ENCODE measurements at regions of chr10 and their contacts with region 1.

Region 1: GRCh38 chr10:12902135-12902572 is 99.4 kb downstream of the CCDC3 start:
- DNase-seq: no peak
- ATAC-seq: peak in 1 of 4 donors; percentile 69
- H3K4me3 ChIP-seq: no peak overlapping the region
- H3K27ac ChIP-seq: no peak overlapping the region
- H3K4me1 ChIP-seq: no peaks in the 10 kb centered on the region
- H3K27me3 ChIP-seq: no peaks in the 10 kb centered on the region
- CTCF ChIP-seq: peak; percentile 63

Region 2: DNA sequence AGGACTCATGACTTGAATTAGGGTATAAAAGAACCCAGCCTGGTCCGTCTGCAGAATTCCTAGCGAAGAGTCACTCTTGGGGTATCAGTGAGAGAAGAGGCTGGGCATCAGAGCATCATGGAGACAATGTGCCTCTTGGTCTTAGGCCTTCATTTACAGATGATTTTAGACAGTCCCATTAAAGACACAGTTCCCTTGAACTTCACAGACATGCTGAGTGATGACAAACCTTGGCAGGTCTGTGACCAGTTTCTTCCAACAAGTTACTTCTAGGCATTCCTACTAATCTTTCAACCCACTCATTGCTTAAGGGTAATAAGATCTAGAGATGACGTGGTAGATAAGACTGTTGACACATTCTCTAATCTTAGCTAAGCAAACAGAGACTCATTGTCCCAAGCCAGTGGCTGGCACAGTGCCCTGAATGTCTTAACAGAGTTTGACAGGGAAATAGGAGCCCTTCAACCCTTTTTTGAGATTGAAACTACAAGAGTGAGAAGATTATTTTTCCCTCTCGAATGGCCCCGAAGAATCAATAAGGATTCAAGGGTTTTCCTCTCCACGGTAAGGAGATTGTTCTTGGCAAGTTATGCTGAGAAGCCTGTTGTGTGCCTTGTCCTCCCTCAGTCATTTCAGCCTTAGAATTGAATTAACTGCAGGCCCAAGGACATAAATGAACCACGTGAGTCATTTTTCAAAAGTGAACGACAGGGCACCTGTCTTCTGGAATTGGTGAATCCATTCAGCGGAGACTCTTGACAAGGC is 181.8 kb before region 1 on chr10:
- intact Hi-C with region 1: loop called (anchors 2 kb)
- DNase-seq: peak; percentile 87 to 91
- ATAC-seq: peak; percentile 85 to 95 (median 94)
- H3K4me3 ChIP-seq: no peak overlapping the region
- H3K27ac ChIP-seq: peak overlapping the region; percentile 69
- H3K4me1 ChIP-seq: no peaks in the 10 kb centered on the region
- H3K27me3 ChIP-seq: no peaks in the 10 kb centered on the region
- CTCF ChIP-seq: no peak

Region 3: GRCh38 chr10:12960334-12960898 is 58.3 kb after region 1 on chr10:
- intact Hi-C with region 1: no loop called
- DNase-seq: no peak
- ATAC-seq: peak in 2 of 4 donors; percentile 61 to 71
- H3K4me3 ChIP-seq: no peak overlapping the region
- H3K27ac ChIP-seq: no peak overlapping the region
- H3K4me1 ChIP-seq: no peaks in the 10 kb centered on the region
- H3K27me3 ChIP-seq: peaks cover 0 to 8% (median 0%) of the 10 kb centered on the region in 3 donors
- CTCF ChIP-seq: no peak

Region 4: GRCh38 chr10:13066527-13066926 is 164.4 kb after region 1 on chr10:
- intact Hi-C with region 1: loop called in 1 of 2 experiments (anchors 5 kb)
- DNase-seq: no peak
- ATAC-seq: no peak
- H3K4me3 ChIP-seq: no peak overlapping the region
- H3K27ac ChIP-seq: no peak overlapping the region
- H3K4me1 ChIP-seq: no peaks in the 10 kb centered on the region
- H3K27me3 ChIP-seq: no peaks in the 10 kb centered on the region
- CTCF ChIP-seq: no peak

Region 5: GRCh38 chr10:13115832-13116803 is 214.0 kb after region 1 on chr10:
- intact Hi-C with region 1: no loop called
- DNase-seq: no peak
- ATAC-seq: peak; percentile 36 to 54 (median 50)
- H3K4me3 ChIP-seq: peak overlapping the region; percentile 20
- H3K27ac ChIP-seq: peak overlapping the region; percentile 84
- H3K4me1 ChIP-seq: peaks cover 51% of the 10 kb centered on the region
- H3K27me3 ChIP-seq: no peaks in the 10 kb centered on the region
- CTCF ChIP-seq: no peak